AG04449 (cell line): ENCODE measurements at regions of chr20 and their contacts with region 1.

Region 1: DNA sequence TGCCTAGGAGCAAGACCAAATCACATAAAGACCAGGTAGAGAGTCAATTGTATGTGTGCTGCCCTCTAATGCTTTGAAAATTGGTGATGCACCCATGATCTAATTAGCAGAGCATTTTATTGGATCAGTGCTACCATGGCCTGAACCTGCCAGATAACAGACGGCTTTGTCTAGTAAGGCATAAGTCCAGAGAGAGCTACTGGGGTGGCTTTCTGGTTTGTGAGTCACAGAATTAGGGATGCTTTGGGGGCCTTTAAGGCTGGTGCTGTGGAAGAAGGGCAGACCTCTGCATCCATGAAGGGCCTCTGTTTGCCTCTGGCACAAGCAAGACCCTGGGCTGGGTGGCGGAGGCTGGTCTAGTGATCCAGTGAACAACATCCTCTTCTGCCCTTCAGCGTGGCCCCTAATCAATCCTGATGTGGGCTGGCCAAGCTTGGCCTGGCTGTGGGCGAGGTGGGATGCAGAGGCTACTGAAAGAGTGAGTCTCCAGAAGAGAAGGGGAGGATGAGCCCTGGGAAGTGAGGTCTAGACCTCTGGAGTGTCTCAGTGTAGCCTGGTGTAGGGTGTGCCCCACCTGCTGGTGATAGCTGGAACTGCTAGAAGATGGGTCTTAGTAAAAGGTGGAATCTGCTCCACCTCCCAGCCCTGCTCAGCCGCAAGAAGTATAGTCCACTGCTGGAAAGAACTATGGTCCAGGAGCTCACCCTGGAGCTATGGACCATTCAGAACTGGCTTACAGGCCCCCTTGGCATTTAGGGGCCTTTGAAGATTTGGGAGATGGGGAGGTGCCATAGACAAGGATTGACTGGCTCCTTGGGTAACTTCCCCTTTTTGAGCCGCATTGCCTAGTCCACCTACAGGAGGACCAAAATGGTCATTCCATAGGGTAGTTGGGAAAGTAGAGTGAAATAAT is 36.7 kb upstream of the AAR2 start:
- DNase-seq: peak; percentile 9
- H3K4me3 ChIP-seq: no peak overlapping the region
- CTCF ChIP-seq: peak; percentile 87

Region 2: GRCh38 chr20:36145877-36146707 is 53.5 kb before region 1 on chr20:
- CTCF ChIA-PET with region 1: interaction called, 24 read pairs
- POLR2A ChIA-PET with region 1: no interaction called
- DNase-seq: no peak
- H3K4me3 ChIP-seq: no peak overlapping the region
- CTCF ChIP-seq: no peak

Region 3: GRCh38 chr20:36214684-36215256 is 15.2 kb after region 1 on chr20:
- CTCF ChIA-PET with region 1: interaction called, 940 read pairs
- POLR2A ChIA-PET with region 1: no interaction called
- DNase-seq: no peak
- H3K4me3 ChIP-seq: no peak overlapping the region
- CTCF ChIP-seq: peak; percentile 71

Region 4: DNA sequence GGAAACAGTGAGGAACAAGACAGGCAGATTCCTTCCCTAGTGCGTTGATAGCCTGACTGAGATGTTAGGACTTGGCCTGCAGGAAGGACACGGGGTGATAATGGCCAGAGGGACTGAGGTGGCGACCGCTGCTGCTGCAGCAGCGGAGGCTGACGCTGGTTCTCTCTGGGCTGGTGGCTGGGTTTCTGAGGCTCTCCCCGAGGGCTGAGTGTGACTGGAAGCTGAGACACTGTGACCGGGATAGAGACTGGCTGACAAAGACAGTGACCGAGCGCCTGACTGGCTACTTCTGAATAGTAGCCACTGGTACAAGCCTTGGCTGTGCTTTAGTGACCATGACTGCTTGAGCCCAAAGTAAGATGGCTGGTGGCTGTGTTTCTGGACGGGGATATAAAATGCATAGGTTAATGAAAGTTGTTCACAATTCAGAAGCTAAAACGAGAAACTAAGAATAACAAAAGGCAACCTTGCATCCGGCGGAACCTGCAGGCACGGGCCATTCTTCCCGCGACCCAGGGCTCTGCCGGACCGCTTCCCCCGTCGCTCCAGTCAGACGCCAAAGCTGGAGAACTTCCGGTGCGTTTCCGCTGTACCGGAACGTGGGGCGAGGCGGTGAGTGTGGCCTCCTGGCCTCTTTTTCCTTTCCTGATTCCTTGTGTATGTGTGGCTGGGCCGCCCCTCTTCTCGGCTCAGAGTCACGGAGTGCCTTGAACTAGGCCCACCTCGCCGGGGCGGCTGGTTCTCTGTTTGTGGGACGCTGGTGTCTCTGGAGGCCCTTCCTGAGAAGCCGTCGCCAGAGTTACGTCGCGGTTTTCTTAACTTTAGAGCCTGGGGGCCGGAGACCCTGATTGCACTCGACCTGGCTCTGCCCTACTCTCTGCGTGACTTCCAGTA is 36.5 kb after region 1 on chr20 and contains the start of gene AAR2:
- CTCF ChIA-PET with region 1: interaction called, 11 read pairs
- POLR2A ChIA-PET with region 1: no interaction called
- DNase-seq: peak; percentile 2
- H3K4me3 ChIP-seq: peak within 1 kb of the TSS; percentile 86
- CTCF ChIP-seq: no peak

Region 5: GRCh38 chr20:36311141-36311853 is 111.7 kb after region 1 on chr20:
- CTCF ChIA-PET with region 1: no interaction called
- POLR2A ChIA-PET with region 1: no interaction called
- DNase-seq: no peak
- H3K4me3 ChIP-seq: no peak overlapping the region
- CTCF ChIP-seq: no peak

Region 6: GRCh38 chr20:36447101-36447500 is 247.5 kb after region 1 on chr20:
- CTCF ChIA-PET with region 1: interaction called, 13 read pairs
- POLR2A ChIA-PET with region 1: no interaction called
- DNase-seq: no peak
- H3K4me3 ChIP-seq: no peak overlapping the region
- CTCF ChIP-seq: no peak